ENCODE measurements at regions of chr1 and their contacts with region 1.

Region 1: GRCh38 chr1:44377925-44378784 is 23.1 kb upstream of the ERI3 start:
- H3K4me3 Mint-ChIP-seq: no peak overlapping the region
- H3K27ac Mint-ChIP-seq: no peak overlapping the region
- H3K4me1 Mint-ChIP-seq: no peaks in the 10 kb centered on the region
- H3K27me3 Mint-ChIP-seq: no peaks in the 10 kb centered on the region

Region 2: GRCh38 chr1:44318097-44319088 is 59.8 kb before region 1 on chr1:
- intact Hi-C with region 1: no loop called
- H3K4me3 Mint-ChIP-seq: no peak overlapping the region
- H3K27ac Mint-ChIP-seq: no peak overlapping the region
- H3K4me1 Mint-ChIP-seq: peaks cover 7% of the 10 kb centered on the region
- H3K27me3 Mint-ChIP-seq: no peaks in the 10 kb centered on the region

Region 3: DNA sequence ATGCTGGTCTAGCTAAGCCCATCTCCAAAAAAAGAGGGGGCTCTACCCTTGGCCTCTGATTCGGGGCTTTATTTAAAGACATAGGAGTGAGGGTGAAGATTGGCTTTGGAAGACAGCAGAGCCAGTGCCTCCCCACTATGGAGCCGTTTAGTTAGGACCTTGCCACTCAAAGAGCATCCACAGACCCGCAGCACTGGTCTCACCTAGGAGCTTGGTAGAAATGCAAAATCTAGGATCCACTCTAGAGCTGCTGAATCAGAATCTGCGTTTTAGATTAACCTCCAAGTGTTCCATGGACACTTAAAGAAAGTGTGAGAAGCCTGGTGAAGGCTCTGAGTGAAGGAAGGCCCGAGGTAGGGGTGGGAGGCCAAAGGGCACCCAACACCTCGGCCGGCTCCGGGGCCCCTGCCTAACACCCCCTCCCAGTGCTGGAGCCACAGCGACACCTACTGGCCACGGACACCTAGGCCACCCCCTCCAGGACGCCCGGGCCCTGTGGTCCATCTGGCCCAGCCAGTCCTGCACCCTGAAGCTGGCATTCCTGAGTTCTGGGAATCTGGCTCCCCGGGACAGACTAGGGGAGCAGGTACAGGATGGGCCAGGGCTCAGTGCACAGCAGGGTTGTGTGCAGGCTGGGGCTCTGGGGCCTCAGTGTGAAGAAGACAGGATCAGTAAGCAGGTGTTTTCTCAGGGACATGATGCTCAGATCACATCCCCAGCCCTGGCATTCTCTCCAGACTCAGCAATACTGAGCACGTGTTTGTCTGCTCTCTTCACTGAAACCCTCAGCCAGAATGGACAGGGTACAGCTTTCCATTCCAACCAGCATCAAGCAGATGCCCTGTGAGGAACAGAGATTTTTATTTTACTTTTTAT is 217.0 kb after region 1 on chr1:
- intact Hi-C with region 1: loop called (anchors 1 kb)
- H3K4me3 Mint-ChIP-seq: no peak overlapping the region
- H3K27ac Mint-ChIP-seq: no peak overlapping the region
- H3K4me1 Mint-ChIP-seq: peaks cover 18% of the 10 kb centered on the region
- H3K27me3 Mint-ChIP-seq: no peaks in the 10 kb centered on the region